ENCODE measurements at regions of chr20 and their contacts with region 1.

Region 1: DNA sequence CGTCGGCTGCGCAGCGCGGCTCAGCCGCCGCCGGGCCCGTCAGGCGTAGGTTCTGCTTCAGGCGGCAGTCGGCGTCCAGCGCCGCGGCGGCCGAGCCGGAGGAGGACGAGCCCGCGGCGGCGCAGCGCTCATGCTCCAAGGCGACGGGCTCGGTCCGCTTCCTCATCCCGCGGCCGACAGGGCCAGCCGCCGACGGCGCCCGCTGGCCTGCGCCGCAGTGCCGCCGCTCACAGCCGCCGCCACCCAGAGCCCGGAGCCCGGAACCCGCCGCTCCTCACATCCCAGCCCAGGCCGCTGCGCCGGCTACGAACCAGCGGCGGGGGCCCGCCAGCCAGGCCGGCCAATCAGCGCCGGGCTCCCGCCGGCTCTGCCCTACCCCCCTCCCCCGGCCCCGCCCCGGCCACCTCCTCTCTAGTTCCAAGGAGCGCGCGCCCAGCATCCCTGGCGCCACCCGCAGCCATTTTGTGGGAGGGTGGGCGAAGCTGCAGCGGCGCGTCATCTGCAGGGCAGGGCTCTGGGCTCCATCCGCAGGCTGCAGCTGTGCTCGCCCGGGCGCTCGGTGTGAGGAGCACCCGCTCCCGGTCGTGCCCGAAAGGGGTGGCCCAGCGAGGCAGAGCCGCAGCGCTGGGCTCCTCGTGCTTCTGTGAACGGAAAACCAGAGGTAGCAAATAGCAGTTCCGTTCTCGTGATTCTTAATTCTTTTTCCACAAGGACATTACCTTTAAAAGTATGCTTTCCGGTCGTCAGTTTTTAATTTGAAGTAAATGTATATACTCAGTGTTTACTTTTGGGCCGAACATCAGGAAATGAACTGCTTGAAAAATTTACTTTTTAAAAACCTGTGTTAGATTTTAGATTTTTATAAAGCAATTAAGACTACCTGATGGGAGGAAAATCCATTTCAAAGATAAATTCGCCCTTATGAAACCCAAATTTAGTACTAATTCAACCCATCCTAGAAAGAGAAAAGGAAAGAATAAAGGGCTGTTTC is at the start of gene ABHD12:
- DNase-seq: peak; percentile 93
- H3K4me3 Mint-ChIP-seq: peak within 1 kb of the TSS; percentile 90
- H3K27ac Mint-ChIP-seq: peak within 1 kb of the TSS; percentile 88
- H3K4me1 Mint-ChIP-seq: peaks cover 18% of the 10 kb centered on the region
- H3K27me3 Mint-ChIP-seq: peaks cover 6% of the 10 kb centered on the region
- total RNA-seq, gene ABHD12: 37.0 and 37.6 TPM in 2 replicates

Region 2: GRCh38 chr20:24948939-24949679 is 441.7 kb before region 1 on chr20 and contains the start of gene CST7:
- intact Hi-C with region 1: loop called (anchors 5 kb)
- DNase-seq: peak; percentile 81
- H3K4me3 Mint-ChIP-seq: peak within 1 kb of the TSS; percentile 90
- H3K27ac Mint-ChIP-seq: peak within 1 kb of the TSS; percentile 99
- H3K4me1 Mint-ChIP-seq: peaks cover 74% of the 10 kb centered on the region
- H3K27me3 Mint-ChIP-seq: no peaks in the 10 kb centered on the region
- total RNA-seq, gene CST7: 127 and 133 TPM in 2 replicates

Region 3: DNA sequence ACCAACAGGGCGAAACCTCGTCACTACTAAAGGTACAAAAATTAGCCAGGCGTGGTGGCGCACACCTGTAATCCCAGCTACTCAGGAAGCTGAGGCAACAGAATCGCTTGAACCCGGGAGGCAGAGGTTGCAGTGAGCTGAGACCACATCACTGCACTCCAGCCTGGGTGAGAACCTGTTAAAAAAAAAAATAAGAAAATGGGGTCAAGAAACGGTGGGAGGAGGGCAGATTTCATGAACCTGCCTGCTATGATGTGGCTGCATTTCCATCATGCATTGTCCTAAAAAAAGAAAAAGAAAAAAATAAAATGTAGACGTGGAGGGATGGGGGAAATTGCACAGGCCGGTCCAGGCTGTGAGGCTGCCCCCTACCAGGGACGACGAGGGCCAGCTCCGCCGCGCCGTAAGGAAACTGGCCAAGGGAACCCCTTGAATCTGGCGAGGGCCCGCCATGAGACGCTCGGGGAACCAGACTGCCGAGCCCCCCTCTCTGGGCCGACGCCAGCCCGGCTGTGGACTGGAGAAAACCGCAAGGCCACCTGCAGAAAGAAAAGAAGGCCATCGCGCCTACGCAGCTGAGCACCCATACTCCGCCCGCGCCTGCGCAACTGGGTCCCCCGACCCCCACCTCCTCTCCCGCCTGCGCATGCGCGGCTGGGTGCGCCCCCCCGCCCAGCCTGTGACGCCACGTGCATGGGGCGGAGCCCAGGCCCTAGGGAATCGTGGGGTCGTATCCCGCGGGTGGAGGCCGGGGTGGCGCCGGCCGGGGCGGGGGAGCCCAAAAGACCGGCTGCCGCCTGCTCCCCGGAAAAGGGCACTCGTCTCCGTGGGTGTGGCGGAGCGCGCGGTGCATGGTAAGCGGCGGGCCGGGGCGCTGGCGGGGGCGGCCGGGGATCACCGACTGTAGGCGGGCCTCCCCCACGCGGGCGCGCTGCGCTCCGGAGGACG is 195.5 kb before region 1 on chr20 and contains the start of gene ENTPD6:
- intact Hi-C with region 1: loop called (anchors 1 kb)
- DNase-seq: peak; percentile 89
- H3K4me3 Mint-ChIP-seq: peak within 1 kb of the TSS; percentile 91
- H3K27ac Mint-ChIP-seq: peak within 1 kb of the TSS; percentile 81
- H3K4me1 Mint-ChIP-seq: peaks cover 20% of the 10 kb centered on the region
- H3K27me3 Mint-ChIP-seq: no peaks in the 10 kb centered on the region
- total RNA-seq, gene ENTPD6: 42.5 and 43.5 TPM in 2 replicates

Region 4: DNA sequence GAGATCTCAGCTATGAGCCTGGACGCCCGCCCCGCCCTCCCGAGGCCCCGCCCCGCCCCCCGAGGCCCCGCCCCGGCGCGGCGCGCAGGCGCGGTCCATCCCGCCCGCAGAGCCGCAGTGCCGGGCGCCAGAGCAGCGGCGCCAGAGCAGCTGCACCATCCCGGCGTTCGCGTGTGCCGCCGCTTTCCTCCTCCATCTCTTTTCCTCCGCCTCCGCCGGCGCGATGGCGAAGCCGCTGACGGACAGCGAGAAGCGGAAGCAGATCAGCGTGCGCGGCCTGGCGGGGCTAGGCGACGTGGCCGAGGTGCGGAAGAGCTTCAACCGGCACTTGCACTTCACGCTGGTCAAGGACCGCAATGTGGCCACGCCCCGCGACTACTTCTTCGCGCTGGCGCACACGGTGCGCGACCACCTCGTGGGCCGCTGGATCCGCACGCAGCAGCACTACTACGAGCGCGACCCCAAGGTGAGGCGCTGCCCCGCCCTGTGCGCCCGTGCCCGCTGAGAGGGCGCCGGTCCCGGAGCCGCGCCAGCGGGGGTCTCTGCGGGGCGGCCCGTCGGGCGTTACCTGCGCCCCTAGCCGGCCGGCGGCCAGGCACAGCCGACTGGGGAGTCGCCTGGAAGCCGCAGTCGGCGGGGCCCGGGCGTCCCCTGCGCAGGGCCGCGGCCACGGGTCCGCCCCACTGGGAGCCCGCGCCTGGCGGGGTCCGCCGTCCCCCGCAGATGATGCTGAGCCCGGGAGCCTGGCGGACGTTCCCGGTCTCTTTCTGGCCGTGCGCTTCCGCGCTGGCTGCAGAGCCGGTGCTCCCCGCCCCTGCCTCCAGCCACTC is 142.7 kb before region 1 on chr20 and contains the start of gene PYGB:
- intact Hi-C with region 1: loop called (anchors 1 kb)
- DNase-seq: peak; percentile 69
- H3K4me3 Mint-ChIP-seq: peak within 1 kb of the TSS; percentile 92
- H3K27ac Mint-ChIP-seq: peak within 1 kb of the TSS; percentile 87
- H3K4me1 Mint-ChIP-seq: peaks cover 43% of the 10 kb centered on the region
- H3K27me3 Mint-ChIP-seq: no peaks in the 10 kb centered on the region
- total RNA-seq, gene PYGB: 36.8 and 38.5 TPM in 2 replicates

Region 5: GRCh38 chr20:25310268-25310920 is 80.4 kb before region 1 on chr20:
- intact Hi-C with region 1: loop called (anchors 1 kb)
- DNase-seq: peak; percentile 61
- H3K4me3 Mint-ChIP-seq: peak overlapping the region; percentile 81
- H3K27ac Mint-ChIP-seq: peak overlapping the region; percentile 98
- H3K4me1 Mint-ChIP-seq: peaks cover 46% of the 10 kb centered on the region
- H3K27me3 Mint-ChIP-seq: no peaks in the 10 kb centered on the region

Region 6: GRCh38 chr20:25344634-25345033 is 46.2 kb before region 1 on chr20:
- intact Hi-C with region 1: loop called (anchors 2 kb)
- DNase-seq: no peak
- H3K4me3 Mint-ChIP-seq: no peak overlapping the region
- H3K27ac Mint-ChIP-seq: no peak overlapping the region
- H3K4me1 Mint-ChIP-seq: peaks cover 32% of the 10 kb centered on the region
- H3K27me3 Mint-ChIP-seq: peaks cover 3% of the 10 kb centered on the region

Region 7: GRCh38 chr20:25437153-25437581 is 46.3 kb after region 1 on chr20:
- intact Hi-C with region 1: no loop called
- DNase-seq: no peak
- H3K4me3 Mint-ChIP-seq: no peak overlapping the region
- H3K27ac Mint-ChIP-seq: no peak overlapping the region
- H3K4me1 Mint-ChIP-seq: peaks cover 5% of the 10 kb centered on the region
- H3K27me3 Mint-ChIP-seq: no peaks in the 10 kb centered on the region

Region 8: DNA sequence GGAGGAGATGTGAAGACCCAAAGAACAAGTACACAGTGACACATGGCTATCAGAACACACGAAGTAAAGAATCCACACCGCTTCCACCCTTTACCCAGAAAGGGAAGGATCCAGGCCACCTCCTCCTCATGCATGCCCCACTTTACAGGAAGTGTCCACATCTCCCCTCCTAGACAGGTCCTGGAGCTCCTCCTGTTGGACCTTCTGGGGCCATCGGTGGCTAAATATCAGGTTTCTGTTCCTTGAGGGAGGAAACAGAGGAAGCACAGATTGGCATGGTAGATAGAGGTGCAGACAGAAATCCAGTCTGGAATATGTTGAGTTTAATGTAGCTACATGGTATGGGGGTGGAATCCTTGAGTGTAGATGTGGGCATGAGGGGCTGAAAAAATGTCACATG is 183.6 kb after region 1 on chr20:
- intact Hi-C with region 1: no loop called
- DNase-seq: no peak
- H3K4me3 Mint-ChIP-seq: no peak overlapping the region
- H3K27ac Mint-ChIP-seq: no peak overlapping the region
- H3K4me1 Mint-ChIP-seq: no peaks in the 10 kb centered on the region
- H3K27me3 Mint-ChIP-seq: no peaks in the 10 kb centered on the region

Region 9: GRCh38 chr20:25623736-25624499 is 233.1 kb after region 1 on chr20 and contains the start of gene NANP:
- intact Hi-C with region 1: loop called (anchors 1 kb)
- DNase-seq: peak; percentile 85
- H3K4me3 Mint-ChIP-seq: peak within 1 kb of the TSS; percentile 91
- H3K27ac Mint-ChIP-seq: peak within 1 kb of the TSS; percentile 98
- H3K4me1 Mint-ChIP-seq: peaks cover 39% of the 10 kb centered on the region
- H3K27me3 Mint-ChIP-seq: peaks cover 4% of the 10 kb centered on the region
- total RNA-seq, gene NANP: 9.1 and 9.8 TPM in 2 replicates

Measured in activated T-helper 1 cell treated with anti-CD3 and anti-CD28 coated beads, Interleukin-12 subunit alpha, Interleukin-12 subunit beta, Interleukin-2, Interleukin-4 antibody, amounts not matched to agents 30 ng/mL and 10 ng/mL and 1 ng/mL, durations not matched to agents 14 hours and 24 hours and 36 hours (primary cell).